IMR-90 (cell line): ENCODE measurements at regions of chr6 and their contacts with region 1.

Region 1: GRCh38 chr6:131949909-131950766 is 1.0 kb downstream of the CCN2 start:
- DNase-seq: peak; percentile 92
- ATAC-seq: peak; percentile 9
- H3K4me3 ChIP-seq: peak overlapping the region; percentile 66
- H3K27ac ChIP-seq: peak overlapping the region; percentile 83
- H3K4me1 ChIP-seq: peaks cover 10% of the 10 kb centered on the region
- H3K27me3 ChIP-seq: no peaks in the 10 kb centered on the region
- CTCF ChIP-seq: peak; percentile 48
- POLR2A ChIP-seq: peak; percentile 57
- RAD21 ChIP-seq: peak; percentile 44

Region 2: DNA sequence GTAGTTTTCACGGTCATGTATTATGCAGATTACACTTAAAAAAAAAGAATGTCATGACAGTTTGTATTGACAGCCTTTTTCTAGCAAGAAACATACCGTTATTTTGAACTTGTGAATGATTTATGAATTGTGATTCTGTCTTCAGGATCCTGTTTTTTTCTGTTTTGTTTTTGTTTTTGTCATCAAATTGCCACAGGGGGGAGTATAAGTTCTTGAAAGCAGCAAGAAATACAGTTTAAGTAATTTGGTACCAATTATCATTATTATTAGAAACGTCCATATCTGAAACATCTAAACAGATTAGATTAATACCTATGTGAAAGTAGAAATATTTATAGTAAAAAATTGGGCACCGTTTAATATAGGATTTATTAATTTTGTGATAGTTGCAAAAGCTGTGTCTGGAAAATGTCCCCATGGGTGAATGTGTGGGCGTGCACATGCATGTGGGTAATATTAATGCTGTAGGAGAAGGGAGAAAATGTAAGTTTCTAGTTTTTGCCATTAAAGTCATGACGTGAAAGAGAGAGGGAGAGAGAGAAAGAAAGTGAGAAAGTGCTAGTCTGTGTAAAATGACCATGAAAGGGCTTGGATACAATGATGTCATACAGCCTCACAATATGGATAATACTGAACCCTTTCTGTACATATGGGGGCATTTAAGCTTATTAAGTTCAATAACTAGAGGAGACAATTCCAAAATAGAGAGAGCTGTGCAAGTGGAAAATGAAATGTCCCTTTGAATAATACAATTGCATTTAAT is 10.4 kb after region 1 on chr6:
- CTCF ChIA-PET with region 1: interaction called, 4 read pairs
- POLR2A ChIA-PET with region 1: interaction called, 17 read pairs
- dilution Hi-C with region 1: no loop called
- in situ Hi-C with region 1: no loop called
- intact Hi-C with region 1: no loop called
- DNase-seq: peak; percentile 47
- ATAC-seq: no peak; the same call in 1 of the 2 replicates
- H3K4me3 ChIP-seq: no peak overlapping the region
- H3K27ac ChIP-seq: no peak overlapping the region
- H3K4me1 ChIP-seq: peaks cover 4% of the 10 kb centered on the region
- H3K27me3 ChIP-seq: no peaks in the 10 kb centered on the region
- CTCF ChIP-seq: peak; percentile 51
- POLR2A ChIP-seq: no peak
- RAD21 ChIP-seq: peak; percentile 50

Region 3: DNA sequence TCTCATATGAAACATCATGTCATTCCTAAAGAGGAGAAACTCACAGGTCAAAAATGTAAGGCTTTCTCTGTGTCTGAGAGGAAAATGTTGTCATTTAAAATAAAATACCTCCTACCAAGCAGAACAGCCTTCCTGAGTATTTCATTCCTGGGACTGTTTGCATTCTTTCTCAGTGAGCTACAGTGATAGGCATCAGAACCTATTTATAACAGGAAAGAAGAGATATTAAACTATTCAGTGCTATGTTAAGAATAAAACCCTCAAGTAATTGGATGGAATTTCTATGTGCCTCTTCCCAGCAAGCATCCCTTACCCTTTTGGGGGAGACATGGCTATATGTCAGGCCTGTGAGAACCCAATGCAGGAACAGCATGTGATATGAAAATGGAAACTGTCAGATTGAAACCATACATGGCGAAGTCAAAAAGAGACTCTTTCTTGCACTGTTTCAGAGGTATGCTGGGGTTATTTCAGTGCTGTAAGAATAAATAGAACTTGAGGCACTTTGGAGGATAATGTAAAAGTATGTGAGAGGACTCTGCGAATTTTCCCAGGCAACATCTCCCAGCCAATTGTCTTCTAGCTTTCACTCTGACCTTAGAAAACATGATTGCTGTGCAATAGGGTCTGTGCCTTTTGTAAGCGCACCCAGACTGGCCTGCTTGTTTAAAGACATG is 134.8 kb after region 1 on chr6:
- CTCF ChIA-PET with region 1: interaction called, 5 read pairs
- POLR2A ChIA-PET with region 1: interaction called, 38 read pairs
- dilution Hi-C with region 1: no loop called
- in situ Hi-C with region 1: no loop called
- intact Hi-C with region 1: loop called (anchors 1 kb)
- DNase-seq: peak; percentile 99
- ATAC-seq: peak; percentile 93
- H3K4me3 ChIP-seq: peak overlapping the region; percentile 2; the same call in 1 of the 2 replicates
- H3K27ac ChIP-seq: peak overlapping the region; percentile 95
- H3K4me1 ChIP-seq: peaks cover 18% of the 10 kb centered on the region
- H3K27me3 ChIP-seq: no peaks in the 10 kb centered on the region
- CTCF ChIP-seq: no peak
- POLR2A ChIP-seq: no peak
- RAD21 ChIP-seq: peak; percentile 15

Region 4: DNA sequence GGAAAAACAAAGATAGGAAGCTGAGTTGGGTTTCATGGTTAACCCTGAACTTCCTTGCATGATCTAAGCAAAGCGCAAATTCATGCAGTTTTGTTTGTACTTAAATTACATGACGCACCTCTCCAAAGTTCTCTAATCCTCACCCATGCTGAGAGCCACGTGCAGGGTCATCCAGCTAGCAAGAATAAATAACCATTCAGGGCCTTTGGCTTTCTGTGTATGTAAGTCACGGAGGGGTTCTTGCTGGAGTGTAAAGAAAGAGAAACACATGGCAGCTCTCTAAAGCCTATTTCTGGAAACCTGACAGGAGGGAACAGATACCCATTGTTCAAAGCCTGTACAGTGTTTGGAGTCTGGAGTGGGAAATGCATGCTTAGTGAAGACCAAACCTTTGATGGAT is 172.7 kb after region 1 on chr6:
- CTCF ChIA-PET with region 1: interaction called, 4 read pairs
- POLR2A ChIA-PET with region 1: interaction called, 7 read pairs
- dilution Hi-C with region 1: no loop called
- in situ Hi-C with region 1: no loop called
- intact Hi-C with region 1: loop called (anchors 1 kb)
- DNase-seq: peak; percentile 100
- ATAC-seq: peak; percentile 89
- H3K4me3 ChIP-seq: no peak overlapping the region
- H3K27ac ChIP-seq: peak overlapping the region; percentile 100; the same call in 1 of the 2 replicates
- H3K4me1 ChIP-seq: peaks cover 15% of the 10 kb centered on the region
- H3K27me3 ChIP-seq: no peaks in the 10 kb centered on the region
- CTCF ChIP-seq: no peak
- POLR2A ChIP-seq: no peak
- RAD21 ChIP-seq: no peak

Region 5: GRCh38 chr6:132161283-132161682 is 211.1 kb after region 1 on chr6:
- CTCF ChIA-PET with region 1: interaction called, 3 read pairs
- POLR2A ChIA-PET with region 1: interaction called, 4 read pairs
- dilution Hi-C with region 1: no loop called
- in situ Hi-C with region 1: no loop called
- intact Hi-C with region 1: loop called (anchors 1 kb)
- DNase-seq: peak; percentile 80
- ATAC-seq: peak; percentile 89
- H3K4me3 ChIP-seq: no peak overlapping the region
- H3K27ac ChIP-seq: no peak overlapping the region
- H3K4me1 ChIP-seq: no peaks in the 10 kb centered on the region; the same call in 1 of the 2 replicates
- H3K27me3 ChIP-seq: no peaks in the 10 kb centered on the region
- CTCF ChIP-seq: peak; percentile 72
- POLR2A ChIP-seq: peak; percentile 46; the same call in 1 of the 2 replicates
- RAD21 ChIP-seq: peak; percentile 88